GM12878 (cell line): ENCODE measurements at regions of chr9 and their contacts with region 1.

Region 1: GRCh38 chr9:87535817-87536539 is 38.3 kb downstream of the DAPK1 start:
- DNase-seq: peak; percentile 80
- ATAC-seq: peak; percentile 90
- H3K4me3 ChIP-seq: no peak overlapping the region
- H3K27ac ChIP-seq: peak overlapping the region; percentile 91
- H3K4me1 ChIP-seq: peaks cover 17% of the 10 kb centered on the region; the same call in 1 of the 2 replicates
- H3K27me3 ChIP-seq: no peaks in the 10 kb centered on the region
- CTCF ChIP-seq: no peak
- EP300 ChIP-seq: peak; percentile 47 to 57; a peak in 3 of 4 replicates
- POLR2A ChIP-seq: peak; percentile 64; the same call in 1 of the 2 replicates
- RAD21 ChIP-seq: no peak; the same call in 1 of the 2 replicates

Region 2: DNA sequence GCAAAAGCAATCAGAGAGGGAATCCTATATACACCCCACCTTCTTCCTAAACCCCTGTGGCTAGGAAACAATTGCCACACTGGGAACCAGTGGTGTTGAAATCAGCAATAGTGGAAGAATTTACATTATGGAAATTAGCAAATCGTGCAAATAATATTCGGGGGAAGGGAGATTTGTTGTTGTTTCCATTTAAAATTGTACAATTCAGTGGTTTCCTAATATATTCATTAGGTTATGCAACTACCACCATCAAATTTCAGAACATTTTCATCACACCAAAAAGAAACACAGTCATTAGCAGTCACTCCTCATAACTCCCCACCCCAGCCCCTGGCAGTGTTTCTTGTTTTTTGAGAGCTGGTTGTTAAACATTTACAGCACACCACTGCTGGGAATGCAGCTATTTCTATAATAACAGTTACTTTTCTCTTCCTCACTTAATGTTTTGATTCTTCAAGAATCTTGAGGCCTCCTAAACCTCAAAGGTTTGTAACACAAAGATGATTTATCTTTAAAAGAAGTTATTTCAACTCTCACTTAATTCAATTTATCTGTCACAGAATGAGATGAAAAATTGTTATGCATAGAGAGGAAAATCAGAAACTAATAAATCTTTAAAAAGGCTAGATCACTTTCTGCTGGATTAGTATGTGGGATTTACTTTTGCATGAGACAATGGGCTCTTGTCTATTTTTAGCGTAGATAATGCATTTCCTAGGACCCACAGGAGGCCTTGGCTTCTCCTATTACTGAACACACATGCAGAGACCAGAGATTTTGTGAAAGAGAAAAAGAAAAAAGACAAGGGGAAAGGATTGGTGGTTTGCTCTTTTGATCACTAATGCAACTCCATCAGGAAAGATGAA is 130.1 kb before region 1 on chr9:
- CTCF ChIA-PET with region 1: no interaction called
- POLR2A ChIA-PET with region 1: no interaction called
- RAD21 ChIA-PET with region 1: no interaction called
- SMC1A ChIA-PET with region 1: no interaction called
- in situ Hi-C with region 1: no loop called
- intact Hi-C with region 1: no loop called
- DNase-seq: no peak
- ATAC-seq: no peak
- H3K4me3 ChIP-seq: no peak overlapping the region
- H3K27ac ChIP-seq: no peak overlapping the region
- H3K4me1 ChIP-seq: no peaks in the 10 kb centered on the region
- H3K27me3 ChIP-seq: no peaks in the 10 kb centered on the region
- CTCF ChIP-seq: no peak
- EP300 ChIP-seq: no peak
- POLR2A ChIP-seq: no peak
- RAD21 ChIP-seq: no peak

Region 3: GRCh38 chr9:87497604-87498045 is 38.4 kb before region 1 on chr9 and contains the start of gene DAPK1:
- CTCF ChIA-PET with region 1: interaction called, 7 read pairs
- POLR2A ChIA-PET with region 1: interaction called, 11 read pairs
- RAD21 ChIA-PET with region 1: interaction called, 14 read pairs
- SMC1A ChIA-PET with region 1: interaction called, 25 read pairs
- in situ Hi-C with region 1: no loop called
- intact Hi-C with region 1: no loop called
- DNase-seq: no peak
- ATAC-seq: peak; percentile 75
- H3K4me3 ChIP-seq: peak within 1 kb of the TSS; percentile 82
- H3K27ac ChIP-seq: peak within 1 kb of the TSS; percentile 85
- H3K4me1 ChIP-seq: peaks cover 11% of the 10 kb centered on the region
- H3K27me3 ChIP-seq: no peaks in the 10 kb centered on the region
- CTCF ChIP-seq: peak in 2 of 3 experiments; percentile 34 to 39; a peak in 2 of 6 replicates
- EP300 ChIP-seq: 0 out of 4 replicates have a peak, but pooled peaks of 1 of the 2 experiments have one; percentile 24
- POLR2A ChIP-seq: peak; percentile 75
- RAD21 ChIP-seq: no peak
- polyA plus RNA-seq, gene DAPK1: 8.2 to 10.4 TPM

Region 4: DNA sequence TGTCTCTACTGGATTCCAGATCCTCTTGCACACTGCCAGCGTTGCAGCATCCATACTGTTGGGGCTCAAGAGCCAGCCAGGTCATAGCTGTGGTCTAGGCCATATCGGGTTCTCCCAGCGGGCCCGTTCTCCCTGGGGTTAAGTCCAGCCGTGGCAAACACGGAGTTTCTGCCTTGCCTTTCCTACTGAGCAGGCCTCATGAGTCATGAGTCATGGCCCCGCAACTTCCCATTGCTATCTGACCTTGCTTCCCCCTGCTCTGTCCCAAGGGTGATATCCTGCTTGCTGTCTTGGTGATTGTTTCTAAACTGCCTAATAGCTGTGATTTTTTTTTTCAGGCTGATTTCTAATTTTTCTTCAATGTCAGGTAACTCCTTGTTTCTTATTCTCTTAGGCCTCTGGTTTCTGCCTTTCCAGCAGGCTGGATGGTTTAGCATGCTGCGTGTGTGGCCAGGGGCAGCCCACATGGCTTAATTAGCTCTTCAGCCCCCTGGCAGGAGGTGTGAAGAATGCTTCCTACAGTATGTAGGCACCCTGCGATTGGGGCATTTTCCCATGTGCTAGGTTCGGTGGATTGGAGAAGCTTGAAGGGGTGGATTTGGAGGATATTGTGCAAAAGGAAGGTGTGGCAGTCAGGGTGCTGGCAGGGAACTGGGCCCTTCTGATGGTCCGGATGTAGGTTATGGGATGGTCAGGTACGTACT is 19.6 kb before region 1 on chr9:
- CTCF ChIA-PET with region 1: no interaction called
- POLR2A ChIA-PET with region 1: interaction called, 3 read pairs
- RAD21 ChIA-PET with region 1: interaction called, 3 read pairs
- SMC1A ChIA-PET with region 1: interaction called, 12 read pairs
- in situ Hi-C with region 1: no loop called
- intact Hi-C with region 1: no loop called
- DNase-seq: no peak
- ATAC-seq: peak; percentile 8; the same call in 2 of the 3 replicates
- H3K4me3 ChIP-seq: no peak overlapping the region
- H3K27ac ChIP-seq: no peak overlapping the region; the same call in 1 of the 2 replicates
- H3K4me1 ChIP-seq: peaks cover 44% of the 10 kb centered on the region
- H3K27me3 ChIP-seq: no peaks in the 10 kb centered on the region
- CTCF ChIP-seq: no peak
- EP300 ChIP-seq: no peak
- POLR2A ChIP-seq: no peak
- RAD21 ChIP-seq: no peak

Region 5: GRCh38 chr9:87557996-87558395 is 22.0 kb after region 1 on chr9:
- CTCF ChIA-PET with region 1: interaction called, 10 read pairs
- POLR2A ChIA-PET with region 1: interaction called, 19 read pairs
- RAD21 ChIA-PET with region 1: interaction called, 63 read pairs
- SMC1A ChIA-PET with region 1: interaction called, 62 read pairs
- in situ Hi-C with region 1: no loop called
- intact Hi-C with region 1: loop called (anchors 1 kb)
- DNase-seq: peak; percentile 64
- ATAC-seq: peak; percentile 71
- H3K4me3 ChIP-seq: no peak overlapping the region
- H3K27ac ChIP-seq: peak overlapping the region; percentile 75
- H3K4me1 ChIP-seq: peaks cover 64% of the 10 kb centered on the region
- H3K27me3 ChIP-seq: no peaks in the 10 kb centered on the region
- CTCF ChIP-seq: no peak
- EP300 ChIP-seq: no peak
- POLR2A ChIP-seq: no peak
- RAD21 ChIP-seq: no peak

Region 6: GRCh38 chr9:87581513-87581912 is 45.5 kb after region 1 on chr9:
- CTCF ChIA-PET with region 1: interaction called, 9 read pairs
- POLR2A ChIA-PET with region 1: interaction called, 9 read pairs
- RAD21 ChIA-PET with region 1: interaction called, 12 read pairs
- SMC1A ChIA-PET with region 1: interaction called, 13 read pairs
- in situ Hi-C with region 1: no loop called
- intact Hi-C with region 1: no loop called
- DNase-seq: no peak
- ATAC-seq: no peak
- H3K4me3 ChIP-seq: no peak overlapping the region
- H3K27ac ChIP-seq: no peak overlapping the region
- H3K4me1 ChIP-seq: peaks cover 20% of the 10 kb centered on the region
- H3K27me3 ChIP-seq: no peaks in the 10 kb centered on the region
- CTCF ChIP-seq: no peak
- EP300 ChIP-seq: no peak
- POLR2A ChIP-seq: no peak
- RAD21 ChIP-seq: no peak

Region 7: GRCh38 chr9:87668722-87669121 is 132.7 kb after region 1 on chr9:
- CTCF ChIA-PET with region 1: no interaction called
- POLR2A ChIA-PET with region 1: no interaction called
- RAD21 ChIA-PET with region 1: no interaction called
- SMC1A ChIA-PET with region 1: no interaction called
- in situ Hi-C with region 1: no loop called
- intact Hi-C with region 1: no loop called
- DNase-seq: no peak
- ATAC-seq: no peak
- H3K4me3 ChIP-seq: no peak overlapping the region
- H3K27ac ChIP-seq: no peak overlapping the region
- H3K4me1 ChIP-seq: no peaks in the 10 kb centered on the region; the same call in 1 of the 2 replicates
- H3K27me3 ChIP-seq: no peaks in the 10 kb centered on the region
- CTCF ChIP-seq: no peak
- EP300 ChIP-seq: no peak
- POLR2A ChIP-seq: no peak
- RAD21 ChIP-seq: no peak

Region 8: GRCh38 chr9:88514247-88514646 is 978.3 kb after region 1 on chr9:
- CTCF ChIA-PET with region 1: no interaction called
- POLR2A ChIA-PET with region 1: no interaction called
- RAD21 ChIA-PET with region 1: no interaction called
- SMC1A ChIA-PET with region 1: no interaction called
- in situ Hi-C with region 1: no loop called
- intact Hi-C with region 1: no loop called
- DNase-seq: no peak
- ATAC-seq: no peak
- H3K4me3 ChIP-seq: no peak overlapping the region
- H3K27ac ChIP-seq: no peak overlapping the region
- H3K4me1 ChIP-seq: no peaks in the 10 kb centered on the region
- H3K27me3 ChIP-seq: no peaks in the 10 kb centered on the region
- CTCF ChIP-seq: no peak
- EP300 ChIP-seq: no peak
- POLR2A ChIP-seq: no peak
- RAD21 ChIP-seq: no peak